Cardiac septum (tissue), 1 donor: ENCODE measurements at regions of chr20 and their contacts with region 1.

Region 1: DNA sequence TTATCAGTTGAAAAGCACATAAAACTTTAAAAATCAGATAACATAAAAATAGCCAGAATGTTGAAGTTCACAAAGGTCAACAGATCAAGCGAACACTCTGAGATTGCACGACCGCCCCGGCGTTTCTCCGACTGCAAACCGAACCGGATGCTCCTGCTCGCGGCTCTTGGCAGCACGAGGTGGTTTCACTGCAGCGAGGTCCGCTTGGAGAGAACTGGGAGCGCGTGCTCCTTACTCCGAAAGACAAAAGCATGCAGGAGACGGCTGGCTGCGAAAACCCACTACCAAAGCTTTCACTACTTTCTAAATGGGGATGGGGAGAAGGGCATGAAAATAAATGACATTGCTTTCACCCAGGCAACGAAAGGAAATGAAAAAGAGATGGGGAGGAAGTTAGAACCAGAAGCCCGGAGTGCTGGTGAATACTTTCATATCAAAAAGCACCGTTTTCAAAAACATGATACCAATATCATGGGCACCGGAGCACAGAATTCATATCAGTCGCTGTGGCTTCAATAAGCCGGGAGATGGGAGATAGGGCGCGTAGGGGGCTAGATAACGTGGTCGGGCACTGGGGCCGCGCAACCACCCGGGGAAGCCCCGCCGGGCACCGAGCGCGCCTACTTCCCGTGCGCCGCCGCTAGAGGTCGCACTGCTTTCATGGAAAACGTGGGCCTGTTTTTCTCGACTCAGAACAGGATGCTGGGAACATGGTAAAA is 8.3 kb upstream of the ANKRD60 start:
- DNase-seq: peak; percentile 89

Region 2: GRCh38 chr20:57680131-57680716 is 556.5 kb before region 1 on chr20:
- intact Hi-C with region 1: no loop called
- DNase-seq: no peak

Region 3: DNA sequence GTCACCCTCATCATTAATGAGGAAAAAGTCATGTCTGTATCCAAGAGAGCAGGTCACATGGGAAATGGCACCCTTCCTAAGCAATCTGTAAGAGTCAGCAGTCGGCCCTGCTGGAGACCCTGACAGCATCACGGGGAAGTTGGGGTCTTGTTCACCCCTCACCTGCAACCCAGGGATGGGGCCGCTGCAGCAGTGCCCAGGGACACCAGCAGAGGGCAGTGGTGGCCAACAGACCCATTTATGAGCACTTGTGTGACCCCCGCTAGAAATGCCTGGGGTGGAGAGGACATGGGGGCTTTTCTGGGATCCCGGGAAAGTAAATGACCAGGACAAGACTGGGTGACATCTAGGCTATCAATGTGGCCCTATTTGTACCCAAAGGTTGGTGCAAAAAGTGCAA is 44.2 kb before region 1 on chr20:
- intact Hi-C with region 1: no loop called
- DNase-seq: no peak

Region 4: DNA sequence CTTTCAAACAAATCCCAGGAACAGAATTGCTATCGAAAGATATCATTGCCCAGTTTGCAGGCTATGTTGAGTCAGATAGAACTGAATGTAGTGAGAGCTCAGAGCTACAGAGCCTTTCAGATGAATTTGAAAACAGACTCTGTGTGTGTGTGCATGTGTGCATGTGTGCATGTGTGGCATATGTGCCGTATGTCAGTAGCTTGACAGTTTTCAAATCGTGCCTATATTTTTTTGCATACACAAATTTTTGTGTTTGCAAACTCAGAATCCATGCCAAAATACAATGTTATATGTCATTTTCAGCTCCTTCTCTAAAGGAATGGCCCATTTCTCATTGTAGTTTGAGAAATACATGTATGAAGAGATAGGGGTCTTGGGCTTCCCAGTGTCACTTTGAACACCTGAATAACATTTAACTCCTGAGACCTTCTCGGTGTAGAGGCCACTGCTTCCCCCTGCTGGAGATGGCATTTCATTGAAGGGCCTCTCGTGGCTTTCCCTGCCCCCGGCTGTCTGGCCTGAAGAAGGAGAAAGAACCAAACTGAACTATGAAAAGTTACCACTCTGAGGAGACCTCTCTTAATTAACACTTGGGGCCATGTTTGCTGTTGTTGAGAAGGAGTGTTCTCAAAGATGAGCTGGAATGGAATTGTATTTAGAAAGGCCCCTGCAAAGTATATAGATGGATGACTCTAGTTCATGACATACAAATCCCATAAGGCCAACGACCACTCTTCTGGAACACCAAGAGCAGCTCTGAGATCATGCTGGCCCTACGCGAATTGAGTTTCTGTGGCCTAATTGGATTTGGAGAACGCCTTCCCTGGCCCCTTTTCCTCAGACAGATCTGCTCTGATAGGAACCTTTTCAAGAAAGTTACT is 211.0 kb after region 1 on chr20:
- intact Hi-C with region 1: loop called (anchors 5 kb)
- DNase-seq: no peak

Region 5: DNA sequence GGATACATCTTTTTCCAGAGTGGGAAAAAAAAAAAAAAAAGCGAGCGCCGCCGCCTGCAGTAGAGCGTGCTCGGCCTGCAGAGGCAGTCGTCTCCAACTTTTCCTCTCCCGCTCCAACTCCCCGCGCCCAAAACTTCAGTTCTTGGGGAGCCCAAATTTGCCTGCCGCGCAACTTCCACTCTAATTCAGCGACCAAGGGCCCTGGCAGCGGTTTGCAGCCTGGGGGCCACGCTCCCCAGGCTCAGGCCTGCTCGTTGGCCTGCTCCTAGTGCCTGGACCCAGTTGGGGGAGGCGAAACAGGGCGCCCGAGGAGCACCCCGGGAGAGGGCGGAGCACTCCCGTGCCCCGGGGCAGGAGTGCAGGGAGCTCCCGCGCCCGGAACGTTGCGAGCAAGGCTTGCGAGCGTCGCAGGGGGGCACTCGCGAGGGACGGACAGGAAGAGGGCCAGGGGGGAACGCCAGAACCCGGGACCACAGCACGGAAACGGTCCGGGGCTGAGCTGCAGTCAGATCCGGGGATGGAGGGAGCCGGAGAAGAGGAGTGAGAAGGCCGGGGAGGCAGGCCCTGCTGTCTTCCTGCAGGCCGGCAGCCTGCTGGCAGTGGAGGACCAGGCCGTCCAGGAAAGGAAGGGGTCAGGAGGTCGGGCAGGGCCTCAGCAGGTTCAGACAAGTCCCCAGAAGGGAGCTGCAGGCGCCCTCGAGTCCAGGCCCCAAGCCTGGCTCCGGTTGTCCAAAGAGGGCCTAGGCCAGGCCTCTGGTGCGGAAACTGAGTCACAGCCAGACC is 414.2 kb after region 1 on chr20 and contains the start of gene STX16:
- intact Hi-C with region 1: loop called (anchors 2 kb)
- DNase-seq: peak; percentile 95
- total RNA-seq, gene STX16: 33.1 TPM

Region 6: DNA sequence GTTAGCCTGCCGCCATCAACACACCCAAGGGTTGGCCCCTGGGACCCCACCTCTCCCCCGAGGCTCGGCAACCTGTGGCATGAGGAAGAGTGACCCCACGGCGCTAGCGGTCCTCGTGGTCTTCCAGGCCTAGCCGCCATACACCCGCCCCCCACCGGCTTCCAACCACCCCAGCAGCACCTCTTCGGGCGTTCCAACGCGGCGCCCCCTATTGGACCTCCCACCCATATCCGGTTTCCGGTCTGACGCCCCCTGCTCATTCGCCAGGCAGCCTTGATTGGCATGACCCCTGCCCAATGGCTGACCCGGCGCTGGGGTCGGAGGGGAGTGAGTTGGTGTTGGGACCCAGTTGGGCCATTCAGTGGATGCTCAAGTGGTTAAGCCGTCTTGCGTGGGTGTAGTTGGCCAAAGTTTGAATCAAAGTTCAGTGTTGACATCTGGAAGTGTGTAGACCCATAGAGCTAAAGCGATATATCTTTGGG is 614.0 kb after region 1 on chr20 and contains the start of gene GNAS-AS1:
- intact Hi-C with region 1: loop called (anchors 10 kb)
- DNase-seq: peak; percentile 86
- total RNA-seq, gene GNAS-AS1: 0.75 TPM

Region 7: GRCh38 chr20:59222253-59223181 is 985.7 kb after region 1 on chr20:
- intact Hi-C with region 1: loop called (anchors 10 kb)
- DNase-seq: peak; percentile 91